Endothelial cell of umbilical vein (primary cell): ENCODE measurements at regions of chr20 and their contacts with region 1.

Region 1: DNA sequence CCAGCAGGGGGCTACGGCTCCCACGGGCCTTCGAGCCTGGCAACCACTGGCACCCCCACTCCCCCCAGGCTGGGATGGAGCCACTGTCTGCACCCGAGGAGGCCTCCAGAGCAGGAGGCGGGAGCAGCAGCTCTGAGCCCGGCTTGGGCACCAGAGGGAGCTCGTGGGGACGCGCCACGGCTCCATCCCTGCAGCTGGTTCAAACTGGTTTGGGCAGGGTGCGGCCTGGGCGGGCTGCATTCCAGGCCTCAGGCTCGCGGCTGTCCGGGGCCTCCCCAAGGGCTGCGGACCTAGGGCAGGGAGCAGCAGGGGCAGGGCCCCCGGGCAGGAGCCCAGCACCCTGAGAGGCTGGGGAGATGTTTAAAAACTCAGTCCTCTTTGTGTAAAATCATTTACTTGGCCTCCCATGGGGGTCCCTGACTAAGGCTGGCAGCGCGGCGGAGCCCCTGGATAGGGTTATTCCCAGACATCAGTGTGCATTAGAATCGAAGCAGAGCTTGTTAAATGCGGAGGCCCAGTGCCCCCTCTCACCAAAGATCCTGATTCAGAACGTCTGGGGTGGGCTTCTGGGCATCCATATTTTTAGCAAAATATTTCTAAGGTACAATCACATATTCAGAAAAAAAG is 4.1 kb upstream of the BCAS4 start:
- DNase-seq: peak; percentile 73
- H3K4me3 ChIP-seq: no peak overlapping the region
- H3K27ac ChIP-seq: peak overlapping the region; percentile 64
- H3K4me1 ChIP-seq: peaks cover 10% of the 10 kb centered on the region
- H3K27me3 ChIP-seq: peaks cover 0 to 4% of the 10 kb centered on the region in 2 experiments
- CTCF ChIP-seq: peak; percentile 87 to 97
- POLR2A ChIP-seq: peak; percentile 71

Region 2: DNA sequence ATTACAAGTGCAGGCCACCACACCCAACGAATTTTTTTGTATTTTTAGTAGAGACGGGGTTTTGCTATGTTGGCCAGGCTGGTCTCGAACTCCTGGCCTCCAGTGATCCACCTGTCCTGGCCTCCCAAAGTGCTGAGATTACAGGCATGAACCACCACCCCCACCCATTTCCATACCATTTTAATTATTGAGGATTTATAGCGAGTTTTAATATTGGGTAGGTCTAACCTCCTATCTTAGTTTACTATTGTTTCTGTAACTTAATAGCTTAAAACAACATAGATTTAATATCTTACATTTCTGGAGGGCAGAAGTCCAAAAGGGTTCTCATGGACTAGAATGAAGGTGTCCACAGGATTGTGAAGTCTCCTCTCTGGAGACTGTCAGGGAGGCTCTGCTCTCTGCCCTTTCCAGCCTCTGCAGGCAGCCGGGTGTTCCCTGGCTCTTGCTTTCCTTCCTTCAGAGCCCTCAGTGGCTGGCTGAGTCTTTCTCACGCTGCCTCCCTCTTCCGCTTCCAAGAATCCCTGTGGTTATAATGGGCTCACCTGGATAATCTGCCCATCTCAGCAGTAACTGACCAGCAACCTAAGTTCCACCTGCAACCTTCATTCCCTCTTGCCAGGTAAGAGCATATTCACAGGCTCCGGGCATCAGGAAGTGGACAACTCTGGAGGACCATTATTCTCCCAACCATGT is 14.5 kb before region 1 on chr20:
- CTCF ChIA-PET with region 1: interaction called, 26 read pairs
- POLR2A ChIA-PET with region 1: no interaction called
- dilution Hi-C with region 1: no loop called
- intact Hi-C with region 1: no loop called
- DNase-seq: no peak
- H3K4me3 ChIP-seq: no peak overlapping the region
- H3K27ac ChIP-seq: no peak overlapping the region
- H3K4me1 ChIP-seq: no peaks in the 10 kb centered on the region
- H3K27me3 ChIP-seq: peaks cover 3% of the 10 kb centered on the region in 2 experiments
- CTCF ChIP-seq: no peak
- POLR2A ChIP-seq: no peak

Region 3: DNA sequence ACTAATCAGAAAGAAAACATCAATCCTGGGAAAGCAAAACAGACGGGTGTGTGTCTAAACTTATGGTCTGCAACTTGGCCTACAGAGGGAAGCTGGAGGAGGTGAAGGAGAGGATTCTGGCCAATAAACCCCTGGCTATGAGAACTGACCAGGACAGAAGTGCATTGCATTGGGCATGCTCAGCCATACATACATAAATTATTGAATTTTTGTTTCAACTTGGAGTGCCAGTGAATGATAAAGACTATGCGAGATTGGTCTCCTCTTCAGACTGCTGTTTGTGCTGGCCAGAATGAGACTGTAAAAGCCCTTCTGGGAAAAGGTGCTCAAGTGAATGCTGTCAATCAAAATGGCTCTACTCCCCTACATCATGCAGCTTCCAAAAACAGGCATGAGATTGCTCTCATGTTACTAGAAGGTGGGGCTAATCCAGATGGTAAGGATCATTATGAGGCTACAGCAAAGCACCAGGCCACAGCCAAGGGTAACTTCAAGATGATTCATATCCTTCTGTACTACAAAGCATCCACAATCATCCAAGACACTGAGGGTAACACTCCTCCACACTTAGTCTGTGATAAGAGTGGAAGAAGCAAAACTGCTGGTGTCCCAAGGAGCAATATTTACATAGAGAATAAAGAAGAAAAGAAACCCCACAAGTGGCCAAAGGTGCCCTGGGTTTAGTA is 123.1 kb after region 1 on chr20:
- CTCF ChIA-PET with region 1: interaction called, 11 read pairs
- POLR2A ChIA-PET with region 1: no interaction called
- dilution Hi-C with region 1: no loop called
- intact Hi-C with region 1: no loop called
- DNase-seq: peak; percentile 63
- H3K4me3 ChIP-seq: no peak overlapping the region
- H3K27ac ChIP-seq: peak overlapping the region; percentile 32
- H3K4me1 ChIP-seq: peaks cover 39% of the 10 kb centered on the region
- H3K27me3 ChIP-seq: no peaks in the 10 kb centered on the region
- CTCF ChIP-seq: no peak
- POLR2A ChIP-seq: no peak

Region 4: GRCh38 chr20:50958615-50959542 is 168.1 kb after region 1 on chr20 and contains the start of gene MOCS3:
- CTCF ChIA-PET with region 1: interaction called, 21 read pairs
- POLR2A ChIA-PET with region 1: no interaction called
- dilution Hi-C with region 1: no loop called
- intact Hi-C with region 1: no loop called
- DNase-seq: peak; percentile 94
- H3K4me3 ChIP-seq: peak within 1 kb of the TSS; percentile 55 to 94 (median 80)
- H3K27ac ChIP-seq: peak within 1 kb of the TSS; percentile 96
- H3K4me1 ChIP-seq: peaks cover 24% of the 10 kb centered on the region
- H3K27me3 ChIP-seq: no peaks in the 10 kb centered on the region
- CTCF ChIP-seq: no peak
- POLR2A ChIP-seq: no peak
- total RNA-seq, gene MOCS3: 3.6 and 4.2 TPM in 2 replicates

Region 5: GRCh38 chr20:51043811-51044210 is 253.0 kb after region 1 on chr20:
- CTCF ChIA-PET with region 1: no interaction called
- POLR2A ChIA-PET with region 1: no interaction called
- dilution Hi-C with region 1: no loop called
- intact Hi-C with region 1: no loop called
- DNase-seq: no peak
- H3K4me3 ChIP-seq: no peak overlapping the region
- H3K27ac ChIP-seq: no peak overlapping the region
- H3K4me1 ChIP-seq: no peaks in the 10 kb centered on the region
- H3K27me3 ChIP-seq: peaks cover 0 to 2% of the 10 kb centered on the region in 2 experiments
- CTCF ChIP-seq: no peak
- POLR2A ChIP-seq: no peak

Region 6: DNA sequence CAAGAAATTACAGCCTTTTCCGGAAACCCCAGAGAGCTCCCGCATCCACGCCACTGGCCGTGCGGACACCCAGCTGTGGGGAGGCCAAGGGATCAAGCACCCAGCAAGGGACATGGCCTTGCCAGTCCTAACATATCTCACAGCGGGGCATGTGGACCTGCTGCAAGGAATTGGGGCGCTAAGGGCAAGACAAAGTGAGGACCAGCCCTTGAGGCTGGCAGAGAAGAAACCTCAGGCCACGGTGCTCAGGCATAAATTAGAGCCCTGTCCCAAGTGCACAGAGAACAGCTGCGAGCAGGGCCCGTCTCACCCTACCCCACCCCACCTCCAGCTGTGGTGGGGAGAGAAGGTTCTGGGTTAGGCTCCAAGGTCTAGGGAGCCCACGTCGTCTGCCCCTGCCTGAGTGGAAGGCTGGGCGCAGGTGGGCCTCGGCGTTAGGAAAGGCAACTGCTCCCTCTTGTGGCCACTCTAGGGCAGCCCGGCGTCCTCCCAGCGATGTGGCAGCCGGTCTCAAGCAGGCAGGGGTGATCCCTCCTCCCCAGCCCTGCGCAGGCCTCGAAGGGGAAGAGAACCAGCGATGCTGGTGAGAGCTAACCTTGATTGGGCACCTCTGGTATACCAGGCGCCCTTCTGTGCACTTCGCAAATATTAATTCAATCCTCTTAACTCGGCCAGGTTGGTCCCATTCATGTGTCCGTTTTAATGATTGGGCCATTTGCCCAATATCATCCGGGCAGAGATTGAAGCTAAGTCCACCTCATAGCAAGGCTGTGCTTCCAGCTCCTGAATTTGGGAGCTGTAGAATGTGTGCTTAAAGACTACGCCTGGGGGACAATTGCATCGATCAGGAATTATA is 516.0 kb after region 1 on chr20:
- CTCF ChIA-PET with region 1: interaction called, 11 read pairs
- POLR2A ChIA-PET with region 1: no interaction called
- dilution Hi-C with region 1: no loop called
- intact Hi-C with region 1: loop called (anchors 1 kb)
- DNase-seq: peak; percentile 63
- H3K4me3 ChIP-seq: no peak overlapping the region
- H3K27ac ChIP-seq: no peak overlapping the region
- H3K4me1 ChIP-seq: no peaks in the 10 kb centered on the region
- H3K27me3 ChIP-seq: peaks cover 0 to 3% of the 10 kb centered on the region in 2 experiments
- CTCF ChIP-seq: peak; percentile 91 to 96
- POLR2A ChIP-seq: no peak